ENCODE measurements at regions of chr1 and their contacts with region 1.

Region 1: GRCh38 chr1:162391790-162392563 is 10.4 kb downstream of the C1orf226 start:
- DNase-seq: peak; percentile 22
- ATAC-seq: no peak
- H3K4me3 Mint-ChIP-seq: no peak overlapping the region
- H3K27ac Mint-ChIP-seq: no peak overlapping the region
- H3K4me1 Mint-ChIP-seq: no peaks in the 10 kb centered on the region
- H3K27me3 Mint-ChIP-seq: peaks cover 12% of the 10 kb centered on the region
- CTCF ChIP-seq: peak; percentile 80

Region 2: DNA sequence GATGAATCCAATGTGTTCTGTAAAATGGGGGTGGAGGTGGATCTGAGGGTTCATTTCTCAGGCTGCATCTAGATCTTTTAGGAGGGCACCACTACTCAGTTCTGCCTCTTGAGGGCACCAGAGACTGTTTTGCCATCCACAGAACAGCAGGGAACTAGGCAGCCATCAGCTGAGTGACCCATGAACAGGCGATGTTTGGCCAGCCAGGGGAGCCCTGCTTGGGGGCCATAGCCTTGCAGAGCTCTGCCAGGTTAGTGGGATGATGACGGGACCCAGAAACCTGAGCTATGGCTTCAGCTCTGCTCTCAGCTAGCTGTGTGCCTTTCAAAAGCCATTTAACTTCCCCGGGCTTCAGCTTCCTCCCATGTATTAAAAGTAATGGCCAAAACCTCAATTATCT is 335.9 kb before region 1 on chr1:
- CTCF ChIA-PET with region 1: interaction called, 27 read pairs
- POLR2A ChIA-PET with region 1: no interaction called
- intact Hi-C with region 1: loop called (anchors 5 kb)
- DNase-seq: peak; percentile 61
- ATAC-seq: peak; percentile 72
- H3K4me3 Mint-ChIP-seq: no peak overlapping the region
- H3K27ac Mint-ChIP-seq: no peak overlapping the region
- H3K4me1 Mint-ChIP-seq: no peaks in the 10 kb centered on the region
- H3K27me3 Mint-ChIP-seq: peaks cover 8% of the 10 kb centered on the region
- CTCF ChIP-seq: peak; percentile 69

Region 3: GRCh38 chr1:162335126-162335525 is 56.9 kb before region 1 on chr1:
- CTCF ChIA-PET with region 1: no interaction called
- POLR2A ChIA-PET with region 1: no interaction called
- intact Hi-C with region 1: no loop called
- DNase-seq: no peak
- ATAC-seq: no peak
- H3K4me3 Mint-ChIP-seq: no peak overlapping the region
- H3K27ac Mint-ChIP-seq: no peak overlapping the region
- H3K4me1 Mint-ChIP-seq: no peaks in the 10 kb centered on the region
- H3K27me3 Mint-ChIP-seq: peaks cover 13% of the 10 kb centered on the region
- CTCF ChIP-seq: no peak

Measured in activated CD8-positive, alpha-beta T cell treated with anti-CD3 and anti-CD28 coated beads for 36 hours (primary cell).